ENCODE measurements at regions of chr1 and their contacts with region 1.

Region 1: GRCh38 chr1:161165742-161166668 is at the start of gene PPOX:
- DNase-seq: peak; percentile 98
- ATAC-seq: peak; percentile 93
- H3K4me3 Mint-ChIP-seq: peak within 1 kb of the TSS; percentile 90
- H3K27ac Mint-ChIP-seq: peak within 1 kb of the TSS; percentile 96
- H3K4me1 Mint-ChIP-seq: peaks cover 36% of the 10 kb centered on the region
- H3K27me3 Mint-ChIP-seq: no peaks in the 10 kb centered on the region
- total RNA-seq, gene PPOX: 37.7 to 38.5 TPM

Region 2: GRCh38 chr1:161021165-161021960 is 144.6 kb before region 1 on chr1:
- CTCF ChIA-PET with region 1: no interaction called
- POLR2A ChIA-PET with region 1: no interaction called
- DNase-seq: peak; percentile 90
- ATAC-seq: peak; percentile 95
- H3K4me3 Mint-ChIP-seq: peak overlapping the region; percentile 87
- H3K27ac Mint-ChIP-seq: peak overlapping the region; percentile 79
- H3K4me1 Mint-ChIP-seq: peaks cover 43% of the 10 kb centered on the region
- H3K27me3 Mint-ChIP-seq: peaks cover 2% of the 10 kb centered on the region

Region 3: DNA sequence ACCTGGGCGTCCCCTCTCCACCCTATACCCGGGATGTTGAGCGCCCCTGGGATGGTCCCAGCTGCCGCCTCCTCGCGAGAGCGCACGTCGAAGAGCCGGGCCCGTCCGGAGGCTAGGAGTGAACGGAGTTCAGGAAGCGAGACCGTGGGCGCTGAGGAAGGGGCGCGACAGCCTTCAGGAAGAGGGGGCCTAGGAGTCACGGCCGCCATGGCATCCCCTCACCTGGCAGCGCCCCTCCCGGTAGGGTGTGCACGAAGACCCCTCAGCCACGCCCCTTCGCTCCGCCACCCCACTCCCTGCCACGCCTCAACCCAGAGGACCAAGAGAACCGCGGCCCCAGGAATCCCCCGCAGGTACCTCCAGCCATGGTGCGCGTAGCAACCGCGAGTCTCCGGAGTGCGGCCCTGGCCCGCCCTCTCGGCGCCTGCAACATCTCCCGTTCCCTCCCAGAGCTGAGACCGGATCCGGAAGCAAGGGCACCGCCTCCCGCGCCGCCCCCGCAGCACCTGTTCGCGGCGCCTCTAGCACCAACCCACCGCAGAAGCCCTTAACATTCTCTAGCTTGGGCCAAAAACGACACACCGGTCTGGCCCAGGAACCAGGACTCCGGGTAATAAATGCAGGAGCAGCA is 127.4 kb before region 1 on chr1 and contains the start of gene TSTD1:
- CTCF ChIA-PET with region 1: no interaction called
- POLR2A ChIA-PET with region 1: no interaction called
- DNase-seq: peak; percentile 89
- ATAC-seq: peak; percentile 91
- H3K4me3 Mint-ChIP-seq: peak within 1 kb of the TSS; percentile 91
- H3K27ac Mint-ChIP-seq: peak within 1 kb of the TSS; percentile 94
- H3K4me1 Mint-ChIP-seq: peaks cover 63% of the 10 kb centered on the region
- H3K27me3 Mint-ChIP-seq: no peaks in the 10 kb centered on the region
- total RNA-seq, gene TSTD1: 63.2 to 63.3 TPM

Region 4: GRCh38 chr1:161132410-161133219 is 33.4 kb before region 1 on chr1 and contains the start of gene DEDD:
- CTCF ChIA-PET with region 1: interaction called, 6 read pairs
- POLR2A ChIA-PET with region 1: interaction called, 14 read pairs
- DNase-seq: peak; percentile 93
- ATAC-seq: peak; percentile 96
- H3K4me3 Mint-ChIP-seq: no peak within 1 kb of the TSS
- H3K27ac Mint-ChIP-seq: no peak within 1 kb of the TSS
- H3K4me1 Mint-ChIP-seq: peaks cover 45% of the 10 kb centered on the region
- H3K27me3 Mint-ChIP-seq: no peaks in the 10 kb centered on the region
- total RNA-seq, gene DEDD: 34.5 to 36.3 TPM

Region 5: DNA sequence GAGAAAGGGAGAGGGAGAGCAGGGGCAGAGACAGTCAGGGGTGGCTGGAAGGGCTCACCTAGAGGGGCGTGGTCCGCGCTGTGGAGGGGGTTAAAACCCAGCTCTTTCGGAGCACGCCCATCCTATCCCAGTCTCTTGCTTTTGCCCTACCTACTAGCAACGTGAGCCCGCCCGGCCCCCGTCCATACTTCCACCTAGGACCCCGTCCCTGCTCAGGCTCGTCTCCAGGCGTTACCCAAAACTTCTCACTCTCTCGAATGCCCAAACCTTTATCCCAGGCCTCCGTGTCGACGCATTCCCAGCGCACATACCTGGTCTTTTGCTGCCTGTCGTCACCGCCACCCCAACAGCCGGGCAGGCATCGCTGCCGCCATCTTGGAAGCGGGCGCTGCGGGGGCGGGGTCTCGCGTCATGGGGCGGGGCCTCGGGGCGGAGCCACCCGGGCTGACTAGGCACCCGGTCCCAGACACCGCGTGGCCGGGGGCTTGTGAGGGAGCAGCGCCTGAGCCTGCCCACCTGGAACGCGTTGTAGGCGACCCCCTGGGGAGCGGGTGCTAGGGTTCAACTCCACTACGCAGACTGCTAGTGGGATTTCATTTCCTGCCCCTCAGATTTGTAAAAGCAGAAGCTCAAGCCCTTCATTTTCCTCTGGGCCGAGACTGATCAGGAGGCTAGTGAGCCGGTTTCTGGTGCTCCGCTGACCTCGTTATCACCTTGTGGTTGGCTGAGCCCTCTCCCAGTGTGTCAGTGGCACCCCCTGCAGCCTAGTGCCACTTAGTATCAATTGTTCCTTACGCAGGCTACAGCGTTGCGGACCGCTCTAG is 11.3 kb after region 1 on chr1 and contains the start of gene B4GALT3:
- CTCF ChIA-PET with region 1: interaction called, 40 read pairs
- POLR2A ChIA-PET with region 1: interaction called, 46 read pairs
- DNase-seq: peak; percentile 94
- ATAC-seq: peak; percentile 91
- H3K4me3 Mint-ChIP-seq: peak within 1 kb of the TSS; percentile 90
- H3K27ac Mint-ChIP-seq: peak within 1 kb of the TSS; percentile 94
- H3K4me1 Mint-ChIP-seq: peaks cover 56% of the 10 kb centered on the region
- H3K27me3 Mint-ChIP-seq: no peaks in the 10 kb centered on the region
- total RNA-seq, gene B4GALT3: 34.2 to 37.0 TPM

Region 6: GRCh38 chr1:161192476-161193465 is 26.8 kb after region 1 on chr1:
- CTCF ChIA-PET with region 1: interaction called, 32 read pairs
- POLR2A ChIA-PET with region 1: interaction called, 13 read pairs
- DNase-seq: peak; percentile 82
- ATAC-seq: peak; percentile 93
- H3K4me3 Mint-ChIP-seq: no peak overlapping the region
- H3K27ac Mint-ChIP-seq: peak overlapping the region; percentile 82
- H3K4me1 Mint-ChIP-seq: peaks cover 57% of the 10 kb centered on the region
- H3K27me3 Mint-ChIP-seq: no peaks in the 10 kb centered on the region

Region 7: DNA sequence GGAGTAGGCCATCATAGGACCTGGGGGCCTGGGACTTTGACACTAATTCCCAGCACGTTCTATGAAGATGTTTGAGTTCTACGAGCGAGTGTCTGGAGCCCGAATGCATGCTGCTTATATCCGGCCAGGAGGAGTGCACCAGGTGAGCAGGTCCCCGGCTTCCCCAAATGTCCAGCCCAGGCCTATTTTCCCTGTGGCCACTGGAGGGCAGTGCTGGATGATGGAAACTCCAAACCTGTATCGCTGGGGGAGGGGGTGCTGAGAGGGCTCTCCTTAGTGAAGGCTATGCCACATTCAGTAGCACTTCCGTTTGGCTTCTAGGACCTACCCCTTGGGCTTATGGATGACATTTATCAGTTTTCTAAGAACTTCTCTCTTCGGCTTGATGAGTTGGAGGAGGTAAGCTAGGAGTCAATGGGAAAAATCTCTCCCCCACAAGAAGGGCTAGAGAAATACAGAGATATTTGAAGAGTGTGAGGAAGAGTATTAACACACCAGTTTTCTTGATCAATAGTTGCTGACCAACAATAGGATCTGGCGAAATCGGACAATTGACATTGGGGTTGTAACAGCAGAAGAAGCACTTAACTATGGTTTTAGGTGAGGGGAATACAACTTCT is 43.9 kb after region 1 on chr1:
- CTCF ChIA-PET with region 1: interaction called, 13 read pairs
- POLR2A ChIA-PET with region 1: no interaction called
- DNase-seq: peak; percentile 84
- ATAC-seq: peak; percentile 89
- H3K4me3 Mint-ChIP-seq: no peak overlapping the region
- H3K27ac Mint-ChIP-seq: peak overlapping the region; percentile 57
- H3K4me1 Mint-ChIP-seq: peaks cover 48% of the 10 kb centered on the region
- H3K27me3 Mint-ChIP-seq: no peaks in the 10 kb centered on the region

Region 8: GRCh38 chr1:161299347-161299746 is 133.3 kb after region 1 on chr1:
- CTCF ChIA-PET with region 1: no interaction called
- POLR2A ChIA-PET with region 1: no interaction called
- DNase-seq: no peak
- ATAC-seq: no peak
- H3K4me3 Mint-ChIP-seq: no peak overlapping the region
- H3K27ac Mint-ChIP-seq: no peak overlapping the region
- H3K4me1 Mint-ChIP-seq: peaks cover 18% of the 10 kb centered on the region
- H3K27me3 Mint-ChIP-seq: no peaks in the 10 kb centered on the region